ENCODE measurements at regions of chr17 and their contacts with region 1.

Region 1: GRCh38 chr17:47663912-47664625 is 14.3 kb downstream of the KPNB1 start:
- DNase-seq: peak; percentile 57 to 87 (median 65)
- H3K4me3 ChIP-seq: no peak overlapping the region
- H3K27ac ChIP-seq: no peak overlapping the region
- H3K4me1 ChIP-seq: peaks cover 0 to 18% of the 10 kb centered on the region in 2 donors
- H3K27me3 ChIP-seq: no peaks in the 10 kb centered on the region
- CTCF ChIP-seq: peak; percentile 63 to 75 (median 73)
- POLR2A ChIP-seq: no peak

Region 2: DNA sequence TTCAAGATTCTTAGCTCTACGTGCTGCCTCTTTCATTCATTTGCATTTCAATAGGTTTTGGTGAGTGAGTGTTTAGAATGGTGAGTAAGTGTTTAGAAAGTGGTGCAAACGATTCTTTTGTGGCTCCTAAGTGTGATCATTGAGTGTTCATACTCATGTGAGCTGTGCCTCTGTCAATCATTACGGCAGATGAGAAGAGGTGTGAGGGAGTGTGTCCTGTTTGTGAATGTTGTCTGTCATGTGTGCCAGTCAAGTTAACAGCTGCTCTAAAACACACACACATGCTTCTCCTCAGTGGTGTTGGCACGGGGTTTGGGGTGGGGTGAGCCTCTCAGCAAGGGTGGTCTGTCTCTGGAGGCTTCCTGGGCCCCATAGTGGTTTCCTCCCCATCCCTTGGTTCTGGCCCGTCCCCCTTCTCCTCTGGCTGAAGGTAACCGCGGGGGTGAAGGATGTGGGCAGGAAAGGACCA is 443.5 kb before region 1 on chr17:
- intact Hi-C with region 1: no loop called
- DNase-seq: no peak
- H3K4me3 ChIP-seq: no peak overlapping the region
- H3K27ac ChIP-seq: no peak overlapping the region
- H3K4me1 ChIP-seq: peaks cover 6 to 12% of the 10 kb centered on the region in 2 donors
- H3K27me3 ChIP-seq: no peaks in the 10 kb centered on the region
- CTCF ChIP-seq: no peak
- POLR2A ChIP-seq: no peak

Region 3: GRCh38 chr17:47802341-47803022 is 138.4 kb after region 1 on chr17:
- intact Hi-C with region 1: loop called in 1 of 2 experiments (anchors 10 kb)
- DNase-seq: peak; percentile 46 to 73 (median 54)
- H3K4me3 ChIP-seq: no peak overlapping the region
- H3K27ac ChIP-seq: no peak overlapping the region
- H3K4me1 ChIP-seq: no peaks in the 10 kb centered on the region
- H3K27me3 ChIP-seq: peaks cover 2% of the 10 kb centered on the region
- CTCF ChIP-seq: peak; percentile 27 to 60 (median 48)
- POLR2A ChIP-seq: no peak

Measured in adrenal gland (tissue), 19 donors.